Mucosa of descending colon (tissue), 3 donors: ENCODE measurements at regions of chr18 and their contacts with region 1.

Region 1: GRCh38 chr18:1019191-1019590 is 114.5 kb downstream of the ADCYAP1 start:
- DNase-seq: no peak
- ATAC-seq: no peak
- H3K4me3 ChIP-seq: no peak overlapping the region
- H3K4me1 ChIP-seq: no peaks in the 10 kb centered on the region
- CTCF ChIP-seq: no peak

Region 2: DNA sequence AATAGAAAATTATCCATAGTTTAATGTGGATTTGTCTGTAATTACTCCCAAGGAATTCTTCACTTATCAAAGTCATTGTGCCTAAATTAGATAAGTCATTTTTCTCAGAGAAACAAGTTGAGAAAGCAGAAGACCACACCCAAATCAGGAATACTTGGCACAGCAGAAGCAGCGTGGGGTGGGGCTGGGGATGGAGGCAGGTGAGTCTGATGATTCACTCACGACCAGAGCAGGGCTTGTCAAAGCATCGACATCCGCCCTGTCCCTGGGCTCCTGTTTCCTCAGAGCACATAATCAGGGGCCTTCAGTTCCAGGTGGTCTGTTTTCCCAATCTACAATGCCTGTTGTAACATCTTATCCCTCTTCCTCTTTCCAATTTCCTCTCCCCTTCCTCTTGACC is 487.2 kb before region 1 on chr18:
- intact Hi-C with region 1: no loop called
- DNase-seq: no peak
- ATAC-seq: no peak
- H3K4me3 ChIP-seq: no peak overlapping the region
- H3K4me1 ChIP-seq: no peaks in the 10 kb centered on the region
- CTCF ChIP-seq: no peak

Region 3: GRCh38 chr18:987325-988186 is 31.6 kb before region 1 on chr18:
- intact Hi-C with region 1: loop called in 1 of 2 experiments (anchors 2 kb)
- DNase-seq: no peak
- ATAC-seq: no peak
- H3K4me3 ChIP-seq: no peak overlapping the region
- H3K4me1 ChIP-seq: no peaks in the 10 kb centered on the region
- CTCF ChIP-seq: no peak